ENCODE measurements at regions of chr3 and their contacts with region 1.

Region 1: DNA sequence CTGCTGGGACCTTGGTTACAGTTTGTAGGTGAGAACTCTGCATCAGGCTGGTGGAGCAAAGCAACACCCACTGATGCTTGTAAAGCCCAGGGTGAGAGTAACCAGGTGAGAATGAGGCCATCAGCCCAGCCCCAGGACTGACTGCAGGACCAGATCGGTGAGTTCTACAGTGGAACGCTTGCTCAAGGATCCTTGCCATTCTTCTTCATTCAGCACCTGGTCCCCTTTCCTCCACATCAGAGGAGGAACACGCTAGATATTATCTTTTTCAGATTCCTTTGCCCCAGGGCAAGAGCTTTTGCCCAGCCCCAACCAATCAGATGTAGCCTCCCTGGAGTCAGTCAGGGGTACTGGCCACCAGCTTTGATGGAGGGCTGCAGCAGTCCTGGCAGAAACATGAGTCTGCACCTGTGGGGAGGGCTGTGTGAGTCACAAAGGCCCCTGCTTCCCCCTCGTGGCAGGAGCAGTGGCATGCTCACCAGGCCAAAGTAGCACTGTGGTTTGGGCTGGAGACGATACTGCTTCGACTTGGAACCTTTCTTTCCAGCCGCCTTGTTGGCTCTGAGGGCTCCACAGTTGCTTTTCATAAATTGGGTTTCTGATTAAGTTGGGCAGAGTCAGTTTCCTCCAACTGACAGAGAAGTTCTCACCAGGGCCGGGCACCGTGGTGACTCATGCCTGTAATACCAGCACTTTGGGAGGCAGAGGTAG is 3.5 kb upstream of the SHISA5 start:
- DNase-seq: no peak
- H3K4me3 ChIP-seq: no peak overlapping the region
- H3K27me3 ChIP-seq: no peaks in the 10 kb centered on the region
- CTCF ChIP-seq: peak; percentile 67

Region 2: DNA sequence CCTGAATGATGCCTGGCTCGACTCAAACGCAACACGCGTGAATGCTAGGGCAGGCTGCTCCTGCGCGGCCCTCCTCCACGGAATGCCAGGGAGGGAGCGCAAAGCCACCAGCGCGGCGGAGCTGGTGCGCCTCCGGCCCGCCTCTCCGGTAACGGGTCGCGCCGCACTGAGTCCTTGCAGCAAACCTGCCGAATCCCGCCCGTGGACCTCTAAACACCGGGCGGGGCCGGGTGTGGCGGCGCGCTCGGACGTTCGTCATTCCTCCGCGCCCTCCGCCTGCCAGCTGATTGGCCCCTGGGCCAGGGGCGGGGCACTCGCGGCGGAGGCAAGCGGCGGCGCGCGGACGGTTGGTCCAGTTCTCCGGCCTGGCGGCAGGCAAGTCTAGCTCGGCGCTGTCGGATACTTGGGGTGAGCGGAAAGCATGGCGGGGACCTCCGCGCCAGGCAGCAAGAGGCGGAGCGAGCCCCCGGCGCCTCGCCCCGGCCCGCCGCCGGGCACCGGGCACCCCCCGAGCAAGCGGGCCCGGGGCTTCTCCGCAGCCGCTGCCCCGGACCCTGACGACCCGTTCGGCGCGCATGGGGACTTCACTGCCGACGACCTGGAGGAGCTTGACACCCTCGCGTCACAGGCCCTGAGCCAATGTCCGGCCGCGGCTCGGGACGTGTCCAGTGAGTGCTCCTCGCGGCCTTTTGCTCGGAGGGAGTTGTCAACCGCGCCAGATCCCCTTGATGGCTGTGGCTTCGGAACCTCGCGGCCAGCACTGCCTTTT is 60.9 kb before region 1 on chr3 and contains the start of gene ATRIP:
- CTCF ChIA-PET with region 1: no interaction called
- POLR2A ChIA-PET with region 1: interaction called, 26 read pairs
- DNase-seq: no peak
- H3K4me3 ChIP-seq: peak within 1 kb of the TSS; percentile 64
- H3K27me3 ChIP-seq: no peaks in the 10 kb centered on the region
- CTCF ChIP-seq: no peak
- polyA plus RNA-seq, gene ATRIP: 6.3 and 7.9 TPM in 2 replicates

Region 3: GRCh38 chr3:48472915-48473616 is 34.4 kb before region 1 on chr3:
- CTCF ChIA-PET with region 1: interaction called, 14 read pairs
- POLR2A ChIA-PET with region 1: no interaction called
- DNase-seq: peak; percentile 65
- H3K4me3 ChIP-seq: peak overlapping the region; percentile 72
- H3K27me3 ChIP-seq: no peaks in the 10 kb centered on the region
- CTCF ChIP-seq: peak; percentile 44